Astrocyte of the cerebellum (primary cell): ENCODE measurements at regions of chr9 and their contacts with region 1.

Region 1: DNA sequence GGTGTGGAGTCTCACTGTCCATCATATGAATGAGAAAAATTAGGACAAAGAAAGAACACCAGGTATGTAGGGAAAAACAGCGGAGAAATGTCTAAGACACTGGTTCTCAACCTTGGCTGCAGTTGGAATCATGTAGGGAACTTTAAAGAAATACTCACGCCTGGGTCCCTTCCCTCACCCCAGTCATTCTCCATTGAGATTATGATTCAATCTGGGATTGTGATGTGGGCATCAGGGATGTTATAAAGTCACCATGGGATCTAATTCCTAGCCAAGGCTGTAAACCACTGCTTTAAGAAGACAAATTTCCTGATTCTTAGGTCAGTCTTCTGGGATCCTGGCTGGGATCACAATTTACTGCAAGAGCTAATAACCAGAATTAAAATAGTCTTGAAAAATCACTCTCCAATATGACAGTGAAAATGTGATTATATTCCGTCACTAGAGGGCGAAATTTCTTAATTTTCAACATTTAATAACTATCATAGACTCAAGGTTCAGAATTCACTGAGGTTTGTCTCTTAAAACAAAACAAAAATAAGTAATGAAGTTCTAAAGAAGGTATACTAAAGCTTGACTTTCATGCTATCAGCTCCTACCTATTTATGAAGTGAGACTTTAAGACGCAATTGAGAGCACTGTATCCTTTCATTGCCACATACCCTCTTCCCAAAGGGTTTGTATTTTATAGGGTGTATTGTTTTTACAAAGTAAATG is 60.5 kb downstream of the GLDC start:
- DNase-seq: peak; percentile 28
- H3K4me3 ChIP-seq: no peak overlapping the region
- CTCF ChIP-seq: no peak

Region 2: DNA sequence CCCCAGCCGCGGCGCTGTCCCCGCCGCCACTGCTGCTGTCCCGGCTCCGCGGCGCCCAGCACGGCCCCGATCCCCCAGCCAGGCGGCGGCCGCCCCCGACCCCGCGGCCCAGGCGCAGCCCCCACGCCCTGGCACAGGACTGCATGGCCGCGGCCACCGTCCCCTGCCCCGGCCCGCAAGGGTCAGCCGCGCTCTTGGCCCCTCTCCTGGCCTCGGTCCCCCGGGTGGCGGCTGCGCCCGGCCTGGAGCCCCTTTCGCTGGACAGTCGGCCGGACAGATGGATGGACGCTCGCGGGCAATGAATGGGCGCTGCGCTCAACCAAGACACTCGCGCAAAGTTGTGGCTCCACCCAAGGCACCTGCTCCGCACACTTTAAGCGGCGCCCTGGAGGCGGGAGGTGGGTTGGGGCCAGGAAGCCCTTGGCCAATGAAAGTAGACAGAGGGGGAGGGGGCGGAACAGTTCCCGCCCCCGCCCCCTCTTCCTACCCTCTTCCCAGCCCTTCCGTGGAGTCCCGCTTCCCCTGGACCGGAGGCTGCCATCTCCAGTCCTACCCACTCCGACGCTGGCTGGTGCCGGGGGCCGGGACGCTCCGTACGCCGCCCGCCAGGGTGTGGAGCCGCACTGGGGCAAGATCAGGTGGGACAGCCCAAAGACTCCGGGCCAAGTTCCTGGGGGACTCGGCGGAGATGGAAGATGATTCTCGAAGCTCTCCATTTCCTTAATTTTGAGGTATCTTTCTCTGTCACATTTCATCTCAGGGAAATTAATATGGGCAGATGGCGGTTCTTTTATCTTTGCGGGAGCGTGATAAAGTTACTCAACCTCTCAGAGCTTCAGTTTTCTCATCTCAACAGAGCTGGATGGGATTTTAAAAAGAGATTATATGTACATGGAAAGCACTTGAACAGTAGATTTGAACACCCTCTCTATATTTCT is 60.6 kb after region 1 on chr9 and contains the start of gene GLDC:
- in situ Hi-C with region 1: loop called (anchors 5 kb)
- DNase-seq: peak; percentile 2
- H3K4me3 ChIP-seq: peak within 1 kb of the TSS; percentile 51
- CTCF ChIP-seq: no peak